ENCODE measurements at regions of chr6 and their contacts with region 1.

Region 1: DNA sequence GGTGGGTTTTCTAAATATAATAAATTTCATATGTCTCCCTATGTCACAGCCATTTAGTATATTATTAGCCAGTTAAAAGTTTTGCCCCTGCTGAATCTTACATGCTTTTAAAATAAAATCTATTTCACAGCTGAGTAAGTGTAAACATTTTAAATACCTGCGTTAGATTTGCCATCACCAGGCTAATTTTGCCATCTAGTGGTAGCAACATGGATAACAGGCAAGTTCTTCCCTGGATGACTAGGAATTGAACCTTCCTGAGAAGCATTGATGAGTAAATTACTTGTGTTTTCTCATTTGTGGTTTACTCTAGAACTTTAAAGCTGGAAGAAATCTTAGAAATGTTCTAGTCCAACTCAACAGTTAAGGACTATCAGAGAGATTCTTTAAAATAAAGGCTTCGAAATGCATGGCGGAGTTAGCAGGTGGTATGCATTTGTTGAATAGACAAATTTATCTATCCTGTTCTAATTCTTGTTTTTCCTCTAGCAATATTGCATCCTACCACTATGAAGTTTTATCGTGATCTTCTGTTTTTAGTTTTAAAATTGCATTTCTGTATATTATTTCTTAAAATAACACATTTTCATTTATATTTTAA is 2.6 kb downstream of the PRSS35 start:
- DNase-seq: peak in 21 of 42 donors; percentile 12 to 81 (median 57)

Region 2: GRCh38 chr6:83067448-83068413 is 447.2 kb before region 1 on chr6 and contains the start of gene DOP1A:
- intact Hi-C with region 1: loop called (anchors 5 kb)
- DNase-seq: peak; percentile 91 to 99 (median 97)

Region 3: DNA sequence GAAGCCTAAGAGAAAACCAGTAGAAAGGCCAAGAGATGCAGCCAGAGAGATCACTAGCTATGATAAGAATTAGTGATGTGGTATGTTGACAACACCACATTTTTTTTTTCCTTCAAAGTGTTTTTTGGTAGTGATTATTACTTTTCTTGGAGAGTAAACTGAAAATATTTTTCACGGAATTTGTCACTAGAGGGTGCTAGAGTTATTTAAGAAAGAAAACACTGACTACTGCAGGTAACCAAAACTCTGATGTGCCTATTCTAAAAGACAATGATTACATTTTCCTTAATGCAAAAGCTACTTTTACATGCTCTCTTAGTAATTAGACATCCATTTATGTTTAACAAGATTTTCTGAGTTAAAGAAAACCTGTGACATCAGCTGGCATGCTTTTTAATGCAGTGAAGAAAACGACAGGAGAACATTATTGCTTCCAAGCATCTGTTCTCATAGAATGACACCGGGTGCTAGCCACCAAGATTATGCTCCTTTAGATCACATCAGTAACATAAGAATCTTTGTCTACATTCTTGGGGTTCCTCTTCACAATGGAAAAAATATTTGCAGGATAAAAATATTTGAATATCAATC is 293.0 kb before region 1 on chr6:
- intact Hi-C with region 1: loop called (anchors 2 kb)
- DNase-seq: no peak

Region 4: DNA sequence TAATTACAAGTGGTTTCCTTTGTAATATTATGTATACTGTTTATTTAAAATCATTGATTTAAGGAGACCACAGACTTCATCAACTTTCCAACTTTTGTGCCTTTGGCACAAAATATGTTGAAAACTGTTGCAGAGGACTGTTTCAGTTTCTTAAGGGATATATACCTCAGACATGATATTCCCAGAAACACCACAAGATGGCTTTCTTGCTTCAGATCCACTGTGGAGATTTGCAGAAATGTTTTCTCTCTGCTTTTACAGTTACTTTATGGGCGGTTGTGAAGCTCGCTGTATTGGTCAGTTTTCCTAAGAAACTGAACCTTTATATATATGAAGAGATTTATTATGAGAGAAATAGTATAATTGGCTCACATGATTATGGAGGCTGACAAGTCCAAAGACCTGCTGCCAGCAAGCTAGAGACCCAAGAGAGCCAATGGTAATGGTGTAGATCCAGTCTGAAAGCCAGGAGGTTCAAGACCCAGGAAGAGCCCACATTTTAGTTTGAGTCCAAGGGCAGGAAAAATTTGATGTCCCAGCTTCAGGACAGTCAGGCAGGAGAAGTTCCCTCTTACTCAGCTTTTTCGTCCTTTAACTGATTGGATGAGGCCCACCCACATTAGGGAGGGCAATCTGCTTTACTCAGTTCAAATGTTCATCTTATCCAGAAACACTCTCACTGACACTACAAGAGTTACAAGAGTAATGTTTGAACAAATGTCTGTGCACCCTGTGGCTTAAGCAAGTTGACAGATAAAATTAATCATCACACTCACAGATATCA is 96.9 kb before region 1 on chr6:
- intact Hi-C with region 1: loop called (anchors 5 kb)
- DNase-seq: peak in 4 of 42 donors; percentile 13 to 43 (median 22)

Region 5: DNA sequence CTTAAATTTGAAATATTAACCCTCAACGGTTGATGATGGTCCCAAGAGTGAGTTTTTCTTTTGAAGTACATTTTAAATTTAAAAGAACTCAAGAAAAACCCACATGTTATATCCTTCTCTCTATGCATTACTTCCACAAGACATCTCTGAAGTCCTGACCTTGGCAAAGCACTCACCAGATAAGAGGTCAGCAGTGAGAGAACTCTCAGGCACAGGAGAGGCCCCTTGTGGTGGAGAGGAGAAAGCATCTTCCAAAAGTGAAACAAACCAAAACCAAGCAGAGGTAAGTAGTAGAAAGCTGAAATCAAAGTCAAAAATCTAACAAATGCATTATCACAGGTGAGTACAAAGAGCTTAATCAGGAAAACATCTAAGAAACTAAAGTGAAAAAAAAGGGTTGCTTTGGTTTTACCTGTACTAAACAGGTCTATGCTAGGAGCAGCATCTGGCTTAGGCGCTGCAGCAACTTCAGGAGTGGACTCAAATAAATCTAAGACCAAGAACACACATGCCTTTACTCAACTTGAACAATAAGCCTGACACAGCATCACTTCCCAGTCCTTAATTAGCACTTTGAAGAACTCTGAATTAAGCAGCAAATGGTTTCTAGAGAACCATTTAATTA is 77.9 kb after region 1 on chr6:
- intact Hi-C with region 1: no loop called
- DNase-seq: no peak

Region 6: DNA sequence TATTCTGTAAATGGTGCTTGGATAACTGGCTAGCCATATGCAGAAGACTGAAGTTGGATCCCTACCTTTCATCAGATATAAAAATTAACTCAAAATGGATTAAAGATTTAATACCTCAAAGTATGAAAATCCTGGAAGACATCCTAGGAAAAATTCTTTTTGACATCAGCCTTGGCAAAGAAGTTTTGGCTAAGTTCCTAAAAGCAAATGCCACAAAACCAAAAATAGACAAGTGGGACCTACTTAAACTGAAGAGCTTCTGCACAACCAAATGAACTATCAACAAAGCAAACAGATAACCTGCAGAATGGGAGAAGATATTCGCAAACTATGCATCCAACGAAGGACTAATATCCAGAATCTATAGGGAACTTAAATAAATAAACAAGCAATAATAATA is 277.9 kb after region 1 on chr6:
- intact Hi-C with region 1: no loop called
- DNase-seq: no peak

Region 7: GRCh38 chr6:84269947-84270733 is 755.2 kb after region 1 on chr6:
- intact Hi-C with region 1: no loop called
- DNase-seq: no peak